ENCODE measurements at regions of chr7 and their contacts with region 1.

Region 1: GRCh38 chr7:102464577-102465280 is at the starts of genes ALKBH4 and LRWD1:
- DNase-seq: peak; percentile 94
- H3K4me3 ChIP-seq: peak within 1 kb of the TSS; percentile 100
- H3K27ac ChIP-seq: no peak within 1 kb of the TSS
- H3K4me1 ChIP-seq: peaks cover 11% of the 10 kb centered on the region
- H3K27me3 ChIP-seq: no peaks in the 10 kb centered on the region
- CTCF ChIP-seq: no peak
- total RNA-seq, gene ALKBH4: 9.7 to 14.1 TPM
- total RNA-seq, gene LRWD1: 11.4 to 19.6 TPM

Region 2: GRCh38 chr7:101586078-101586905 is 878.4 kb before region 1 on chr7:
- intact Hi-C with region 1: no loop called
- DNase-seq: peak; percentile 83
- H3K4me3 ChIP-seq: no peak overlapping the region
- H3K27ac ChIP-seq: peak overlapping the region; percentile 7
- H3K4me1 ChIP-seq: peaks cover 9% of the 10 kb centered on the region
- H3K27me3 ChIP-seq: no peaks in the 10 kb centered on the region
- CTCF ChIP-seq: no peak

Region 3: DNA sequence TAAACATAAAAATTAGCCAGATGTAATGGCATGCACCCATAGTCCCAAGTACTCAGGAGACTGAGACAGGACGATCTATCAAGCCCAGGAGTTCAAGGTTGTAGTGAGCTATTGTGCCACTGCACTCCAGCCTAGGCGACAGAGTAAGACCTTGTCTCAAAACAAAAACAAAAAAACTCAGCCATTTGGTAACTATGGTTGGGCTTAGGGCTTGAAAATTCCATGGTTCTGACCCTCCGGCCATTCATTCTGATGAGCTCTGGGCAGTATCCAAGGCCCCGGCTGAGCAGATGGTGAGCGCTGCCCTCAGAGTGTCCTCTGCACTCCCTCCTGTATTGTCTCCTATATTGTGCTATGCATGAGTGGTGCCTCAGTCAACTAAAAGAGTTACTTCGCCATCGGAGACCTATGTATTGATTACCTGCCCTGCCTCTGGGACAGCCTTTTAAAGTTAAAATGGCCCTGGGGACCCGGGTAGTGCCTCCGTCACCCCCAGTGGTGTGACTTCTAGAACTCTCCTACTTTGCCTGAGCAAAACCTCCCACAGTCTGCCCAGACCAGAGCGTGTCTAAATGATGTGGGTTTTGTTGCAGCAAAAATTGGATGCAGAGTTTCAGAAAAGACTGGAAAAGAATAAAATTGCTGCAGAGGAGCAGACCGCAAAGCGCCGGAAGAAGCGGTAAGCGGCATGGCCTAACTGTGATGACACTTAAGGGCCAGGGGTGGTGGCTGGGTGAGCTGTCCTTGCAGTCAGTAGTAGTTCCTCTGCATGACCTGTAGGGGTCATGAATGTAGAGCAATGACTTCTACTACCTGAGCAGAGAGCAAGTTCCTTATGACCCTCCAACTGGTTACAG is 60.5 kb before region 1 on chr7:
- intact Hi-C with region 1: loop called (anchors 10 kb)
- DNase-seq: peak; percentile 26
- H3K4me3 ChIP-seq: no peak overlapping the region
- H3K27ac ChIP-seq: no peak overlapping the region
- H3K4me1 ChIP-seq: no peaks in the 10 kb centered on the region
- H3K27me3 ChIP-seq: no peaks in the 10 kb centered on the region
- CTCF ChIP-seq: peak; percentile 72

Measured in colonic mucosa (tissue), 4 donors.